Right ventricle myocardium inferior (tissue), 1 donor: ENCODE measurements at regions of chr3 and their contacts with region 1.

Region 1: GRCh38 chr3:12663936-12664908 is at the start of gene RAF1:
- DNase-seq: peak; percentile 99
- ATAC-seq: peak; percentile 97
- total RNA-seq, gene RAF1: 144 TPM

Region 2: GRCh38 chr3:12158387-12159226 is 505.6 kb before region 1 on chr3 and contains the start of gene TIMP4:
- intact Hi-C with region 1: loop called (anchors 10 kb)
- DNase-seq: peak; percentile 77
- ATAC-seq: peak; percentile 76
- total RNA-seq, gene TIMP4: 23.8 TPM

Region 3: GRCh38 chr3:12590096-12590495 is 74.1 kb before region 1 on chr3:
- intact Hi-C with region 1: loop called (anchors 5 kb)
- DNase-seq: no peak
- ATAC-seq: no peak

Region 4: GRCh38 chr3:12629560-12629959 is 34.7 kb before region 1 on chr3:
- intact Hi-C with region 1: loop called (anchors 5 kb)
- DNase-seq: no peak
- ATAC-seq: peak; percentile 82

Region 5: GRCh38 chr3:12719984-12720898 is 56.0 kb after region 1 on chr3:
- intact Hi-C with region 1: loop called (anchors 5 kb)
- DNase-seq: peak; percentile 83
- ATAC-seq: peak; percentile 96